H1 (cell line): ENCODE measurements at regions of chr6 and their contacts with region 1.

Region 1: DNA sequence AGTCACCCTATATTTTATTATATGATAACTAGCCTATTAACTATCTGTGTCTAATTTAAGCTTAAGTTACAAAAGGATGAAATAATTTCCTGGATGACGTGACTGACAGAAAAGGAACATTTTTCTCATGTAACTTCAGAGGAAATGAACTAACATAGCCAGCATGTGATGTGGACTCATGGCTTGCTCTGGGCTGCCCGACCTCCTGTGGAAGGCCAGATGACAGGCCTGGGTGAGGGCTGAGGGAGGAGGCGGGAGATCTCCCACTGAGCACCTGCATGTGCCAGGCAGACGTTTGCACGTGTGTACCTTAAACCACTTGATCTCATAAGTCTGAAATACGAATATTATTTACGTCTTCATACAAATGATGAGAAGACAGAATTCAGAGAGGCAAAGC is 321.1 kb downstream of the SYNE1 start:
- DNase-seq: no peak
- H3K4me3 ChIP-seq: no peak overlapping the region
- H3K27ac ChIP-seq: no peak overlapping the region
- H3K4me1 ChIP-seq: no peaks in the 10 kb centered on the region
- H3K27me3 ChIP-seq: no peaks in the 10 kb centered on the region
- CTCF ChIP-seq: no peak
- EP300 ChIP-seq: no peak
- POLR2A ChIP-seq: no peak
- RAD21 ChIP-seq: no peak

Region 2: GRCh38 chr6:152301764-152302568 is 14.1 kb before region 1 on chr6:
- CTCF ChIA-PET with region 1: interaction called, 14 read pairs
- POLR2A ChIA-PET with region 1: no interaction called
- DNase-seq: peak; percentile 65 to 88
- H3K4me3 ChIP-seq: peak overlapping the region; percentile 71 to 80 (median 76)
- H3K27ac ChIP-seq: no peak overlapping the region
- H3K4me1 ChIP-seq: peaks cover 0 to 5% (median 1%) of the 10 kb centered on the region in 4 experiments; a peak in 1 of 7 replicates
- H3K27me3 ChIP-seq: no peaks in the 10 kb centered on the region
- CTCF ChIP-seq: peak; percentile 54 to 65 (median 64)
- EP300 ChIP-seq: no peak
- POLR2A ChIP-seq: peak in 1 of 2 experiments; percentile 68; a peak in 1 of 3 replicates
- RAD21 ChIP-seq: peak; percentile 46 to 52